Activated naive CD8-positive, alpha-beta T cell treated with anti-CD3 and anti-CD28 coated beads, Interleukin-2, amount 10 ng/mL, durations not matched to agents 7 days and 5 days (primary cell): ENCODE measurements at regions of chr16 and their contacts with region 1.

Region 1: GRCh38 chr16:71808593-71809459 is at the start of gene AP1G1:
- DNase-seq: peak; percentile 85
- ATAC-seq: peak; percentile 97
- H3K4me3 Mint-ChIP-seq: peak within 1 kb of the TSS; percentile 86
- H3K27ac Mint-ChIP-seq: peak within 1 kb of the TSS; percentile 100
- H3K4me1 Mint-ChIP-seq: peaks cover 19% of the 10 kb centered on the region
- H3K27me3 Mint-ChIP-seq: no peaks in the 10 kb centered on the region
- total RNA-seq, gene AP1G1: 86.3 to 93.2 TPM

Region 2: GRCh38 chr16:71794943-71795342 is 13.9 kb before region 1 on chr16:
- POLR2A ChIA-PET with region 1: interaction called, 11 read pairs
- DNase-seq: no peak
- ATAC-seq: no peak
- H3K4me3 Mint-ChIP-seq: peak overlapping the region; percentile 34
- H3K27ac Mint-ChIP-seq: peak overlapping the region; percentile 70
- H3K4me1 Mint-ChIP-seq: peaks cover 42% of the 10 kb centered on the region
- H3K27me3 Mint-ChIP-seq: no peaks in the 10 kb centered on the region

Region 3: DNA sequence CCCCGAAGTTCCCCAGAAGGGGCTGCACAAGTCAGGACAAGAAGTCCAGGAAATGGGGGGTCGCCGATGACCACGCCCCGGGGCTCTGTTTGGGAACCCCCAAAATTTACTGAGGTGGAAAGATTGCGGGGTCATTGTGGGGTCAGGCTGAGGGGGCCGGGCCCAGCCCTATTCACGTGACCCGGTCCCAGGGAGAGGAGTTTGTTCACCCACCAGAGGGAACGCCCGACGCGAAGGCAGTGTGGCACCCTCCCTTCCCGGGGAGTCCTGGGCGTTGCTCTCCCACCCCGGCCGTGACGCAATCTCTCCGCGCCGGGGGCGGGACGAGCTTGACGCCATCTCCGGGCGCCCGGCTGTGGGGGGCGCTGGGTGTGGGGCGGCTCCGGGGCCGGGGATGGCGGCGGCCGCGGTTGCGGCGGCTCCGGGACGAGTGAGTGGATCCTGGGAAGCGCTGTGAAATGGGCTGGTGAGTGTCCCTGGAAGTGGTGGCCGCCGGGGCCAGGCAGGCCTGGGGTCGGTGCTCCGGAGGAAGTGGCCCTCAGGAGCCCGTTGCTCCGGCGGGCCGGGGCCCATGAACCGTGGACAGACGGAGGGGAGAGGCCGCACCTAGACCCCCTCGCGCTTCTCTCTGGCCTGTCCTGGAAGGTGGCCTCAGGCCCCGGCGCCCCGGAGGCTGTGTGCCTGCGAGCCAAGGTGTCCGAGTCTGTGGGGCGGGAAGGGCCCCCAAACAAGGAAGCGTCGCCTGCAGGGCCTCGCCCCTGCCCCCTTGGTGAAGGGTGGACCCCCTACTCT is 37.0 kb after region 1 on chr16 and contains the start of gene ATXN1L:
- POLR2A ChIA-PET with region 1: interaction called, 14 read pairs
- DNase-seq: peak; percentile 99
- ATAC-seq: peak; percentile 98
- H3K4me3 Mint-ChIP-seq: peak within 1 kb of the TSS; percentile 94
- H3K27ac Mint-ChIP-seq: peak within 1 kb of the TSS; percentile 96
- H3K4me1 Mint-ChIP-seq: peaks cover 29% of the 10 kb centered on the region
- H3K27me3 Mint-ChIP-seq: no peaks in the 10 kb centered on the region
- total RNA-seq, gene ATXN1L: 27.8 to 28.3 TPM

Region 4: DNA sequence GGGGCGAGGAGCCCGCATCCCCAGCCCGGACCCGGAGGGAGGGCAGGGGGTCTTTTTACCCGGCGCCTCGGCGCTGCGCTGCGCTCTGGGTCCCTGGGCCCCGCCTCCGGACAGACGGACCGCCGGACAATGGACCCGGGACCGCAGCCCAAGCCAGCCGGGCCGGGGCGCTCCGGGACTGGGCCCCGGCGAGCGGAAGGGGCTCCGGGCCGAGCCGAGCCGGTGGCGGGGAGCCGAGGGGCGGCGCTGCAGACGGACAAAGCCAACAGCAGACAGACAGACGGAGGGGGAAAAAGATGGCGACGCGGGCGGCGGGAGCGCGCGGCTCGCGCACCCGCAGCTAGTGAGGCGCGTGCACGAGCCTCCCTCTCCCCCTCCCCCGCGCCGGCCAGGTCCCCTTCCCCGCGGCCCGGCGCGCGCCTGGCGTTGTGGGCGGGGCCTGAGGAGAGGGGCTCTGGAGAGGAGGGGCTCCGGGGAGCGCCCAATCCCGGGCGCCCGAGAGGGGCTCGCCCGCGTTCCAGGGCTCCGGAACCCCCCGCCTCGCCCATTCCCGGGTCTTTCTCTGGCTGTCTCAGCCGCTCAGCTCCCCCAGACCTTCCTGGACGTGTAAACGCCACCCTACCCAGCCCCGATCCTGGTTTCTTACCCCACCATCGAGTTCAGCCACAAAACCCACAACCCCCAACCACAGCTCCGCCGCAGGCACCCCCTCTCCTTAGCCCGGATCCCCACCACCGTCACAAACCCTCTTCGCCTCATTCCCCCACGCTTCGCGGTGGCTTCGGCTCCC is 75.2 kb after region 1 on chr16 and contains the start of gene ZNF821:
- POLR2A ChIA-PET with region 1: interaction called, 52 read pairs
- DNase-seq: peak; percentile 81
- ATAC-seq: peak; percentile 48
- H3K4me3 Mint-ChIP-seq: peak within 1 kb of the TSS; percentile 90
- H3K27ac Mint-ChIP-seq: peak within 1 kb of the TSS; percentile 88
- H3K4me1 Mint-ChIP-seq: peaks cover 41% of the 10 kb centered on the region
- H3K27me3 Mint-ChIP-seq: peaks cover 31% of the 10 kb centered on the region
- total RNA-seq, gene ZNF821: 5.7 to 8.0 TPM

Region 5: GRCh38 chr16:71894921-71895678 is 86.3 kb after region 1 on chr16 and contains the start of gene IST1:
- POLR2A ChIA-PET with region 1: interaction called, 27 read pairs
- DNase-seq: peak; percentile 96
- ATAC-seq: peak; percentile 94
- H3K4me3 Mint-ChIP-seq: peak within 1 kb of the TSS; percentile 94
- H3K27ac Mint-ChIP-seq: peak within 1 kb of the TSS; percentile 95
- H3K4me1 Mint-ChIP-seq: peaks cover 15% of the 10 kb centered on the region
- H3K27me3 Mint-ChIP-seq: no peaks in the 10 kb centered on the region
- total RNA-seq, gene IST1: 228 to 248 TPM